Calu3 (cell line): ENCODE measurements at regions of chr5 and their contacts with region 1.

Region 1: DNA sequence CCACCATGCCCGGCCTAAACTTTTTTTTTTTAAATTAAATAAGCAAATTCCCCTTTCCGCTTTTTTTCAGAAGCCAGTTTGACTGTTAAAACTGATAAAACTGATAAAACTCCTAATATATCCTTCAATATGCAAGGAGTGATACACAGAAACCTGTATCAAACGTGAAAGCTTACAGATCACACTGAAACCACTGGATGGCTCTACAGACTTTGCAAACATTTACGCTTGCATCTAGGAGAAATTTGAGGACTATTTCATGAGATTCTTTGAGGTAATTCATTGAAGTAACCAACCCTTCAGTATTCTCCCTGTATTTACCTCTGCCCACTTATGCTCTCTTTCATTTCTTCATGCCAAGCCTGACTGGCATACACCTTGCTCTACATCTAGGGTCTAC is 40.6 kb upstream of the CHD1 start:
- DNase-seq: no peak
- H3K4me3 Mint-ChIP-seq: no peak overlapping the region
- H3K27ac Mint-ChIP-seq: no peak overlapping the region
- H3K4me1 Mint-ChIP-seq: peaks cover 5% of the 10 kb centered on the region
- H3K27me3 Mint-ChIP-seq: no peaks in the 10 kb centered on the region
- CTCF ChIP-seq: no peak

Region 2: GRCh38 chr5:98880151-98880550 is 89.2 kb before region 1 on chr5:
- CTCF ChIA-PET with region 1: no interaction called
- intact Hi-C with region 1: no loop called
- DNase-seq: peak; percentile 46
- H3K4me3 Mint-ChIP-seq: no peak overlapping the region
- H3K27ac Mint-ChIP-seq: peak overlapping the region; percentile 6
- H3K4me1 Mint-ChIP-seq: peaks cover 59% of the 10 kb centered on the region
- H3K27me3 Mint-ChIP-seq: no peaks in the 10 kb centered on the region
- CTCF ChIP-seq: no peak

Region 3: DNA sequence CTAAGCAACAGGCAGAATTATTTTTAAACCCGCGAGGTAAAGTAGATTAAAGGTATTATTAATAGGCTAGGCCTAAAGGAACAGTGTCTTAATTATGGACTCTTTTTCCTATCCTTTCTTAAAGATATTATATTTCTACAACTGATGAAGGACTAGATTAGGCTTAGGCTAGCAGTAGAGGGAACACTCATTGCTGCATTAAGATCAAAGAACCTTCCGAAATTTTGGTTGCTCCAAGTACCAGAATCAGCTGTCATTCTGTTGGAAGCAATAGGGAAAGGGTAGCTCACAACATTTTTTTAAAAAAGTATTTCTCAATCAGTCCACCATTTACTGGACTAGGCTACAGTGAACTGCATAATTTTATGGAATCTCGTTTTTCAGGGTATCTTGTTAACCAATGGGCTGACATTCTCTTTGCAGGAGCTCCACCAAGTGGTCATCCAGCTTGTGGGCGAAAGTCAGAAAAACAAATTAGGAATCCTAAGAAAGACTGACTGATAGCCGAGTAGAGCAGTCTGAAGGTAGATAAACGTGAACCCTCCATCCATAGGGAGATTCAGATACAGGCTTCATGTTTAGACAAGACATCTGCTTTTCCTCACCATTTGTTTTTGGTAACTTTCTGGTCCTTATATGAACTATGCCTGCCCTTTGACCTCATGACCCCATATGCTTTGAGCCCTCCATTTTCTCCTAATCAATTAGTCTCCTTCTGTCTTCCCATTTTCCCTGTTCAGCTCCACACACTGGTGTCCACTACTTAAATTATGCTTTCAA is 63.0 kb after region 1 on chr5:
- CTCF ChIA-PET with region 1: no interaction called
- intact Hi-C with region 1: loop called (anchors 1 kb)
- DNase-seq: peak; percentile 80
- H3K4me3 Mint-ChIP-seq: peak overlapping the region; percentile 62
- H3K27ac Mint-ChIP-seq: peak overlapping the region; percentile 64
- H3K4me1 Mint-ChIP-seq: peaks cover 50% of the 10 kb centered on the region
- H3K27me3 Mint-ChIP-seq: no peaks in the 10 kb centered on the region
- CTCF ChIP-seq: peak; percentile 81